Heart left ventricle (tissue), 16 donors: ENCODE measurements at regions of chrX and their contacts with region 1.

Region 1: DNA sequence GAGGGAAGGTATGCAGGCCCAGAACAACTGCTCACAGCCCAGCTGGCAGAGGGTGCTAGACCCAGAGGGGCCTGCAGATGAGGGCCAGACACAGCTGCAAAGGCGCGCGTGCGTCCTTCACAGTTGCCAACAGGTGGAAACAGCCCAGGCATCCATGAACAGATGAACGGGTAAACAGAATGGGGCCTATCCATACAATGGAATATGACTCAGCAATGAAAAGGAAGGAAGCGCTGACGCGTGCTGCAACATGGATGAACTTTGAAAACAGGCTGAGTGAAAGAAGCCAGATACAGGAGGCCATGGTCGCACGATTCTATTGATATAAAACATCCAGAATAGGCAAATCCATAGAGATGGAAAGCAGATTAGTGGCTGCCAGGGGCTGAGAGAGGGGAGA is 83.1 kb upstream of the DDX3X start:
- DNase-seq: no peak
- ATAC-seq: no peak
- H3K4me3 ChIP-seq: no peak overlapping the region
- H3K27ac ChIP-seq: no peak overlapping the region
- H3K4me1 ChIP-seq: peaks cover 0 to 15% (median 0%) of the 10 kb centered on the region in 12 donors
- H3K27me3 ChIP-seq: peaks cover 0 to 21% (median 0%) of the 10 kb centered on the region in 9 donors
- CTCF ChIP-seq: no peak
- POLR2A ChIP-seq: no peak

Region 2: DNA sequence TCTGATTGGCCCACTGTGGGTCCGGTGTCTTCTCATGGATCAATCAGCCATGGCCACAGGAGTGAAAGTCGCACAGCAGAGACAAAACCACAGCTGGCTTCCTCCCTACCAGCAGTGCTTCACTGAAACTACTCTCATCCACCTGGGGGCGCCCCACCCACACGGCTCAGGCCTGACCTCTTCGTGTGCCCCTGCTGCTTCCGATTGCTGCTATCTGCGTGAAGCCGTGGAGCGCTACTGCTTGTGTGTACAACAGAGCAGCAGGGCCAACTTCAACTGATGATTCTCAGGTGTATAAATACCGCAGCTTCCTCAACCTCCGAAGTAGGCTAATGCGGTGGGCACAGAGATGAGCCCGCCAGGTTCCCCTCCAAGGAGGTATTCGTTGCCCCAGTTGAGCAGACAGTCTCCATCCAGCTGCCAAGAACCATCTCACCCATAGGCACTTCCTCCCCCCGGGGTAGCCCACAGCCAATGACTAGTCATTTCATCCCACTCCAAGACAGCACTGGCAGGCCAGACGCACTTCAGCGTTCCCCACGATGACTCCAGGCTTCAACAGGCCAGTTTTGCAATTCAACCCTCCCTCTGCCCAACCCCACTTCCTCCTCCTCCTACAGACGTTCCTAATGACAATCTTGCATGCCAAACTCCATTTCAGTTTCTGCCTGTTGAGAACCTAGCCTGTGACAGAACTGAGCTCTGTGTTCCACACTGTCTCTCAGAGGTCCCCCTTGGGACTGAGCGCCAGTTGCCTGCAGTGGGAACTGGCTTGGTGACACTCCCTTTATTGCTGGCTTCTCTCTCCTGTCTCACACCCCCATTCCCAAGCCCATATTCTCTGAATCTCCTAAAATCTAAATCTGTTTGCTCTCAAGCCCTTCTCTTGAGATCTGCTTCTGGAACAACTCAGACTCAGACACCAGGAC is 711.4 kb before region 1 on chrX:
- intact Hi-C with region 1: loop called in 2 of 10 experiments (anchors 5 kb)
- DNase-seq: peak in 4 of 5 donors; percentile 20 to 65 (median 53)
- ATAC-seq: peak; percentile 37 to 88 (median 76)
- H3K4me3 ChIP-seq: no peak overlapping the region
- H3K27ac ChIP-seq: peak overlapping the region in 4 of 12 donors; percentile 19 to 55 (median 26)
- H3K4me1 ChIP-seq: peaks cover 0 to 11% (median 0%) of the 10 kb centered on the region in 12 donors
- H3K27me3 ChIP-seq: peaks cover 0 to 65% (median 0%) of the 10 kb centered on the region in 9 donors
- CTCF ChIP-seq: peak in 1 of 12 donors; percentile 18
- POLR2A ChIP-seq: no peak

Region 3: DNA sequence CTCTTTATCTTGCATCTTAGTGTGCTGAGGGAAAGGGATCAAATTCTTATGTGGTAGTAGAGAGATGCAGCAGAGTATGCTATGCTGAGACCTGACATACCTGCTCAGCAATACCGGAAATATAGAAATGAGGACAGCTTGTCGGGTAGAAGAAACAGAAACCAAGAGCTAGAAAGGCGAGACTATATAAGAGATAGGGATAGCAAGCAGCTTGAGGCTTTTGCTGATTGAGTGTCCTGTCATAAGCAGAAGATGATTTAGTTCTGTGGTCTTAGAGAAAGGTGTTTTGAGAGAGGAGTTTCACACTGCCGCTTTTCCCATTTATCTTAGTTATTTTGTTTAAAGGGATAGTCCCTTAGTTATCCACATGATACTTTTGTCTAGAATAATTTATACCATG is 133.9 kb before region 1 on chrX:
- intact Hi-C with region 1: no loop called
- DNase-seq: no peak
- ATAC-seq: peak in 1 of 4 donors; percentile 44
- H3K4me3 ChIP-seq: no peak overlapping the region
- H3K27ac ChIP-seq: no peak overlapping the region
- H3K4me1 ChIP-seq: peaks cover 0 to 79% (median 19%) of the 10 kb centered on the region in 12 donors
- H3K27me3 ChIP-seq: no peaks in the 10 kb centered on the region
- CTCF ChIP-seq: no peak
- POLR2A ChIP-seq: no peak

Region 4: GRCh38 chrX:41180194-41180908 is 70.5 kb before region 1 on chrX:
- intact Hi-C with region 1: loop called in 1 of 10 experiments (anchors 5 kb)
- DNase-seq: peak in 3 of 5 donors; percentile 8 to 47 (median 34)
- ATAC-seq: peak in 1 of 4 donors; percentile 65
- H3K4me3 ChIP-seq: no peak overlapping the region
- H3K27ac ChIP-seq: peak overlapping the region in 1 of 12 donors; percentile 27
- H3K4me1 ChIP-seq: peaks cover 0 to 21% (median 2%) of the 10 kb centered on the region in 12 donors
- H3K27me3 ChIP-seq: no peaks in the 10 kb centered on the region
- CTCF ChIP-seq: peak in 11 of 12 donors; percentile 35 to 85 (median 64)
- POLR2A ChIP-seq: no peak

Region 5: GRCh38 chrX:41209853-41210252 is 41.0 kb before region 1 on chrX:
- intact Hi-C with region 1: no loop called
- DNase-seq: no peak
- ATAC-seq: no peak
- H3K4me3 ChIP-seq: no peak overlapping the region
- H3K27ac ChIP-seq: no peak overlapping the region
- H3K4me1 ChIP-seq: no peaks in the 10 kb centered on the region
- H3K27me3 ChIP-seq: no peaks in the 10 kb centered on the region
- CTCF ChIP-seq: no peak
- POLR2A ChIP-seq: no peak